Common myeloid progenitor, CD34-positive (primary cell): ENCODE measurements at regions of chr16 and their contacts with region 1.

Region 1: GRCh38 chr16:57720142-57720575 is 15.4 kb upstream of the KATNB1 start:
- DNase-seq: peak; percentile 77 to 88 (median 85)
- H3K4me3 ChIP-seq: no peak overlapping the region
- H3K27ac ChIP-seq: no peak overlapping the region
- H3K4me1 ChIP-seq: peaks cover 0 to 39% (median 6%) of the 10 kb centered on the region in 4 experiments
- H3K27me3 ChIP-seq: no peaks in the 10 kb centered on the region

Region 2: GRCh38 chr16:57688987-57689761 is 31.0 kb before region 1 on chr16:
- CTCF ChIA-PET with region 1: interaction called, 72 read pairs
- POLR2A ChIA-PET with region 1: interaction called, 5 read pairs
- DNase-seq: no peak
- H3K4me3 ChIP-seq: peak overlapping the region in 6 of 7 experiments; percentile 15 to 73 (median 64)
- H3K27ac ChIP-seq: peak overlapping the region; percentile 97 to 99
- H3K4me1 ChIP-seq: peaks cover 17 to 89% (median 80%) of the 10 kb centered on the region in 4 experiments
- H3K27me3 ChIP-seq: no peaks in the 10 kb centered on the region

Region 3: DNA sequence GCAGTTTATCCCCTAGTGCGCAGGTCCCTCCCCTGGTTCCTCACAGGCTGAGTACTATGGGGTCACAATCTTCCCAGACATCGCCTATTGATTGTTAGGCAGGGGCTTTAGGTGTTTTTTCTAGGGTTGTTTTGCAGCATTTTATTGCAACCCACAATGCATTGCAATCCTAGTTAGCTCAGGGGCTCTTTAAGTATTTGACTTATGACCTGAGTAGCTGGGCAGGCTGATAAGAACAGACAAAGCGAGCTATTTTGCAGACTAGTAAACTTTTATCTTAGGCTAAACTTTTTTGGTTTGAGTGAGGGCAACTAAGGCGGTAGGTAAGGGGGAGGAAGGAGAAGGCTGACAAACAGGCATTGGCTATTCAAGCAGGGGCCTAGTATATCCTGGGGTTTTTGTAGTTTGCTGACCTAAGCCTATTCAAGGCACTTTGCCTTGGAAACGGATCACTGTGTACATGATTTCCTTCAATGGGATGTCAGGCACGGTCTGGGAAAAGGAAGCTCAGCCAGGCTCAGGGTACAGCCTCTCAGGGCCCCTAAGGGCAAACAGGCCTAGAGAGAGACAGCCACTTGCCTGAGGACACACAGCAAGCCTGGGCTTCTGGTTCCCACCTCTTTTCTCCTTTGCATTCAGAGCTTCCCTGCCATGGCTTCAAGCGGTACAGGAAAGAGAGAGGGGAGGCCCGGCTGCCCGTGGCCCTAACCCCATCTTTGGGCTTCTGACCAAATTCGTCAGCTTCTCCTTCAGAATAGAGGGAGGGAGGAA is 19.2 kb before region 1 on chr16:
- CTCF ChIA-PET with region 1: interaction called, 24 read pairs
- POLR2A ChIA-PET with region 1: interaction called, 3 read pairs
- DNase-seq: no peak
- H3K4me3 ChIP-seq: no peak overlapping the region
- H3K27ac ChIP-seq: peak overlapping the region in 1 of 2 experiments; percentile 55
- H3K4me1 ChIP-seq: peaks cover 0 to 37% (median 30%) of the 10 kb centered on the region in 4 experiments
- H3K27me3 ChIP-seq: no peaks in the 10 kb centered on the region

Region 4: GRCh38 chr16:57775661-57776469 is 55.7 kb after region 1 on chr16:
- CTCF ChIA-PET with region 1: no interaction called
- POLR2A ChIA-PET with region 1: no interaction called
- DNase-seq: no peak
- H3K4me3 ChIP-seq: no peak overlapping the region
- H3K27ac ChIP-seq: no peak overlapping the region
- H3K4me1 ChIP-seq: peaks cover 0 to 7% (median 0%) of the 10 kb centered on the region in 4 experiments
- H3K27me3 ChIP-seq: no peaks in the 10 kb centered on the region